Naive thymus-derived CD4-positive, alpha-beta T cell (primary cell): ENCODE measurements at regions of chr12 and their contacts with region 1.

Region 1: GRCh38 chr12:47705566-47706425 is at the start of gene RPAP3:
- DNase-seq: peak; percentile 91 to 99 (median 95)
- ATAC-seq: peak; percentile 97
- H3K4me3 ChIP-seq: peak within 1 kb of the TSS; percentile 59
- H3K4me3 Mint-ChIP-seq: peak within 1 kb of the TSS; percentile 92 to 99 (median 98)
- H3K27ac ChIP-seq: peak within 1 kb of the TSS; percentile 85
- H3K27ac Mint-ChIP-seq: peak within 1 kb of the TSS; percentile 93 to 99 (median 97)
- H3K4me1 ChIP-seq: peaks cover 21 to 27% of the 10 kb centered on the region in 2 donors
- H3K4me1 Mint-ChIP-seq: peaks cover 48 to 73% (median 63%) of the 10 kb centered on the region in 7 donors
- H3K27me3 ChIP-seq: no peaks in the 10 kb centered on the region
- H3K27me3 Mint-ChIP-seq: no peaks in the 10 kb centered on the region
- total RNA-seq, gene RPAP3: 28.5 to 51.3 (median 43.9) TPM

Region 2: GRCh38 chr12:46217541-46218321 is 1488.1 kb before region 1 on chr12:
- CTCF ChIA-PET with region 1: no interaction called
- POLR2A ChIA-PET with region 1: no interaction called
- intact Hi-C with region 1: loop called in 1 of 2 experiments (anchors 5 kb)
- DNase-seq: peak in 8 of 9 donors; percentile 58 to 87 (median 84)
- ATAC-seq: peak; percentile 54
- H3K4me3 ChIP-seq: peak overlapping the region; percentile 41
- H3K4me3 Mint-ChIP-seq: peak overlapping the region; percentile 74 to 89 (median 81)
- H3K27ac ChIP-seq: peak overlapping the region; percentile 78
- H3K27ac Mint-ChIP-seq: peak overlapping the region; percentile 89 to 100 (median 99)
- H3K4me1 ChIP-seq: peaks cover 95% of the 10 kb centered on the region in 2 donors
- H3K4me1 Mint-ChIP-seq: peaks cover 69 to 100% (median 98%) of the 10 kb centered on the region in 7 donors
- H3K27me3 ChIP-seq: no peaks in the 10 kb centered on the region
- H3K27me3 Mint-ChIP-seq: no peaks in the 10 kb centered on the region

Region 3: GRCh38 chr12:47190271-47190750 is 515.5 kb before region 1 on chr12:
- CTCF ChIA-PET with region 1: no interaction called
- POLR2A ChIA-PET with region 1: no interaction called
- intact Hi-C with region 1: loop called in 1 of 2 experiments (anchors 5 kb)
- DNase-seq: no peak
- ATAC-seq: no peak
- H3K4me3 ChIP-seq: no peak overlapping the region
- H3K4me3 Mint-ChIP-seq: peak overlapping the region; percentile 42 to 87 (median 76)
- H3K27ac ChIP-seq: peak overlapping the region; percentile 61
- H3K27ac Mint-ChIP-seq: peak overlapping the region; percentile 81 to 98 (median 93)
- H3K4me1 ChIP-seq: peaks cover 52 to 77% of the 10 kb centered on the region in 2 donors
- H3K4me1 Mint-ChIP-seq: peaks cover 69 to 98% (median 93%) of the 10 kb centered on the region in 7 donors
- H3K27me3 ChIP-seq: no peaks in the 10 kb centered on the region
- H3K27me3 Mint-ChIP-seq: no peaks in the 10 kb centered on the region

Region 4: DNA sequence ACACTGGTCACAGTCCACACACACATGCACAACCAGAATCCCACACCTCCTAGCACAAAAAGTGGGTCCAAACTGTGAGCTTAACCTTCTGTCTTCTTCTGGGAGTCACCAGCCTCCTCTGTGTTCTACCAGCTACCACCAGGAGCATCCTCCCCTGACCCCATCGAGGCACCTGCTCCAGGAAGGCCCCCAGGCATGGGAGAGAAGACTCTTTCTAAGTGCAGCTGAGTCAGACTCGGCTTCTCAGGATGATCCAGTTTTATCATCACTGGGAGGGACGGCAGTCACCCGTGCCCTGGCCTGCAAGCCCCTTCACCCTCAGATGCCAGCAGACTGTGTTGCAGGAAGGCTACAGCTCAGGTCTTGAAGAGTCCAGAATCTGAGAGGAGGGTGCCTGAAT is 27.3 kb after region 1 on chr12:
- CTCF ChIA-PET with region 1: no interaction called
- POLR2A ChIA-PET with region 1: no interaction called
- intact Hi-C with region 1: no loop called
- DNase-seq: no peak
- ATAC-seq: no peak
- H3K4me3 ChIP-seq: no peak overlapping the region
- H3K4me3 Mint-ChIP-seq: no peak overlapping the region
- H3K27ac ChIP-seq: no peak overlapping the region
- H3K27ac Mint-ChIP-seq: peak overlapping the region in 1 of 9 donors; percentile 25
- H3K4me1 ChIP-seq: no peaks in the 10 kb centered on the region
- H3K4me1 Mint-ChIP-seq: peaks cover 0 to 7% (median 0%) of the 10 kb centered on the region in 7 donors
- H3K27me3 ChIP-seq: no peaks in the 10 kb centered on the region
- H3K27me3 Mint-ChIP-seq: no peaks in the 10 kb centered on the region

Region 5: DNA sequence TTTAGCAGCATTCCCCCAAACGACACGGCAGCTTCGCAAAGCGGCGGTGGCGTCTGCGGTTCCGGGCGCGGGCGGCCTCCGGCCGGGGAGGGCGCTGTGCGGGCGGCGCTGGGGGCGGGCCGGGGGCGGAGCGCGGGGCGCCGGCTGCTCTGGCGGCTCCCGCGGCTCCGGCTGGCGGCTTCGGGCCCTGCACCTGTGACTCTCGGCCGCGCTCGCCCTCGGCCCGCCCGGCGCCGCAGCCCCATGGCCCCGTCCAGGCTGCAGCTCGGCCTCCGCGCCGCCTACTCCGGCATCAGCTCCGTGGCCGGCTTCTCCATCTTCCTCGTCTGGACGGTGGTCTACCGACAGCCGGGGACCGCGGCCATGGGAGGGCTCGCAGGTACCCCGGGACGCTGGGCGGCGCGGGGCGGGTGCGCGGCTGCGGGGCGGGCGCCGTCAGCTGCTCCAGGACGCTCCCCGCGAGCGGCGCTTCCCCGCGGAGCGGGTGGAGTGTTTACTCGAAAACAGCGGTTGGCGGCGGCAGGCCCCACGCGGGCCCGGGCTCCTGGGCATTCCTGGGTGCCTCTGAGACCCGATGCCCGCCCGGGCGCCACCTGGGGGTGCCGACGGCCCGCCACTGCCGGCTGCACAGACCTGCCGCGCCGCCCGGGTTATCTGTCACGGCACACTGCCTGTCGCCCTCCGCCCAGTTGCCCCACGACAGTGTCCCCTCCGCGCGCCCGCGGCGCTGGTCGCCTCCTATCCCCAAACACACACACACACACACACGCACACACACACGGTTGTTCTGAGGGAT is 67.5 kb after region 1 on chr12 and contains the start of gene SLC48A1:
- CTCF ChIA-PET with region 1: interaction called, 5 read pairs
- POLR2A ChIA-PET with region 1: interaction called, 3 read pairs
- intact Hi-C with region 1: loop called in 1 of 2 experiments (anchors 1 kb)
- DNase-seq: peak; percentile 63 to 84 (median 80)
- ATAC-seq: peak; percentile 96
- H3K4me3 ChIP-seq: peak within 1 kb of the TSS; percentile 59
- H3K4me3 Mint-ChIP-seq: peak within 1 kb of the TSS in 9 of 10 donors; percentile 83 to 94 (median 91)
- H3K27ac ChIP-seq: peak within 1 kb of the TSS; percentile 74
- H3K27ac Mint-ChIP-seq: peak within 1 kb of the TSS; percentile 75 to 94 (median 80)
- H3K4me1 ChIP-seq: peaks cover 7 to 8% of the 10 kb centered on the region in 2 donors
- H3K4me1 Mint-ChIP-seq: peaks cover 7 to 47% (median 25%) of the 10 kb centered on the region in 7 donors
- H3K27me3 ChIP-seq: no peaks in the 10 kb centered on the region
- H3K27me3 Mint-ChIP-seq: peaks cover 0 to 8% (median 0%) of the 10 kb centered on the region in 5 donors
- total RNA-seq, gene SLC48A1: 6.7 to 14.3 (median 10.0) TPM

Region 6: DNA sequence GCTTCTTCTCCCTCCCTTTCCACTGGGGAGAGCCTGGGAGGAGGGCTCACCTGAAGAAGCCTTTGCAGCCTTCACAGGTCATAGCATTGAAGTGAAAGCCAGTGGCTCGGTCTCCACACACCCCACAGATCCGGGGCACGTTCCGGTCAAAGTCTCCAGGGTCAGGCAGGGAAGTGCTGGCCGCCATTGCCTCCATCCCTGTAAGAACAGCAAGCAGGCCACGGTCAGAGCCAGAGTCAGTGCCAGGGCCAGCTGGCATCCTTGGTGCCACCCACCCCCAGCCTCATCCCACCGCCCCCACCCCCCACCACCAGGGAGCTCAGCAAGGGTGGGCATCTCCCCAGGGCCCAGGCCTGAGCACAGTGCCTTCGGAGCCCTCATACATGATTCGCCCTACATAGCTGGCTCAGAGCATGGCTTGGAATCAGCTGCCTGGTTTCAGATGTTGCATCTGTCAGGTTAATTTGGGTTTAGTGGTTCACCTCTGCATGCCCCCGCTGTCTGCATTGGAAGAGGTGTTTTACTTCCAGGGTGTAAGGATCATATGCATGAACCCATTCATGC is 173.2 kb after region 1 on chr12:
- CTCF ChIA-PET with region 1: no interaction called
- POLR2A ChIA-PET with region 1: no interaction called
- intact Hi-C with region 1: no loop called
- DNase-seq: no peak
- ATAC-seq: no peak
- H3K4me3 ChIP-seq: no peak overlapping the region
- H3K4me3 Mint-ChIP-seq: no peak overlapping the region
- H3K27ac ChIP-seq: no peak overlapping the region
- H3K27ac Mint-ChIP-seq: no peak overlapping the region
- H3K4me1 ChIP-seq: peaks cover 8 to 21% of the 10 kb centered on the region in 2 donors
- H3K4me1 Mint-ChIP-seq: peaks cover 22 to 70% (median 28%) of the 10 kb centered on the region in 7 donors
- H3K27me3 ChIP-seq: no peaks in the 10 kb centered on the region
- H3K27me3 Mint-ChIP-seq: no peaks in the 10 kb centered on the region

Region 7: DNA sequence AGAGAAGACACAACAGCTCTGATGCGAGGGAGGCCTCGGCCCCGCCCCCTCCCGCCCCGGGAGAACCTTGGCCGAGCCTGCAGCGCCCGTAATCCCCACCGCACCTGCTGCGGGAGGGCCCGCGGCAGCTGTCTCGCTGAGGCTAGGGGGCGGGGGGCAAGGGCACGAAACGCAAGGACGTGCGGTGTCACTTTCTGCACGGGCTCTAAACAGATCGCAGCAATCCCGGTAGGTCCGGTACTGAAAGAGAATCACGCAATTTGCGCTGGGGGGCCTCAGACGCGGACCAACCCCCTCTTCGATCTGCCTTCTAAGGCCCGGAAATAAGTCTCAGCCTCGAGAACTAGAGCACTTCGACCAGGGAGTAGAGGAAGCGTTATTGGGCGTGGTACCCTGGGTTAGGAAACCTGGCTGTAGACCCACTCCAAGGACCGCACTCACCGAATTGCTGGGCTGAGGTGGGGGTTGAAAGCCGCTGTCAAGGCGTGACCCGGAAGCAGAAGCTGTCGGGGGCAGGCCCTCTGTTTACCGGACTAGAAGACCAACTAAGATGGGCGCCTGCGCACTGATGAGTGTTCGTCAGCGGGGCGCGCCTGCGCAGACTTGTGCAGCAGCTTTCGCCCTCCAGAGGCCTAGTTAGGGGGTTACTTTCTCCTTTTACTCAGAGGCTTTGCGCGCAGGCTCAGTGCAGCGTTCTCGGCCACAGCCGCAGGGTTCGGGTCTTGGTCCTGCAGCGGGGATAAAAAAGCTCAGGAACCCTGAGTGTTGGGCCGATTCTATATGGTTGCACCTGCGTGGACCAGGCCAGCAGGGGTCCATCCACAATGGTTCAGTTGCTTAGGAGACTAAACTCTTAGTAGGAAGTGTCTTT is 451.5 kb after region 1 on chr12 and contains the start of gene ASB8:
- CTCF ChIA-PET with region 1: interaction called, 3 read pairs
- POLR2A ChIA-PET with region 1: interaction called, 4 read pairs
- intact Hi-C with region 1: loop called (anchors 1 kb)
- DNase-seq: peak; percentile 95 to 99 (median 98)
- ATAC-seq: peak; percentile 98
- H3K4me3 ChIP-seq: peak within 1 kb of the TSS; percentile 97
- H3K4me3 Mint-ChIP-seq: peak within 1 kb of the TSS; percentile 90 to 99 (median 97)
- H3K27ac ChIP-seq: peak within 1 kb of the TSS; percentile 84
- H3K27ac Mint-ChIP-seq: peak within 1 kb of the TSS; percentile 95 to 99 (median 99)
- H3K4me1 ChIP-seq: peaks cover 8 to 20% of the 10 kb centered on the region in 2 donors
- H3K4me1 Mint-ChIP-seq: peaks cover 22 to 65% (median 56%) of the 10 kb centered on the region in 7 donors
- H3K27me3 ChIP-seq: no peaks in the 10 kb centered on the region
- H3K27me3 Mint-ChIP-seq: peaks cover 0 to 5% (median 0%) of the 10 kb centered on the region in 5 donors
- total RNA-seq, gene ASB8: 42.9 to 75.9 (median 54.9) TPM

Region 8: GRCh38 chr12:48681738-48682532 is 976.1 kb after region 1 on chr12 and contains the start of gene KANSL2:
- CTCF ChIA-PET with region 1: no interaction called
- POLR2A ChIA-PET with region 1: no interaction called
- intact Hi-C with region 1: loop called in 1 of 2 experiments (anchors 1 kb)
- DNase-seq: peak; percentile 79 to 98 (median 96)
- ATAC-seq: peak; percentile 97
- H3K4me3 ChIP-seq: peak within 1 kb of the TSS; percentile 88
- H3K4me3 Mint-ChIP-seq: peak within 1 kb of the TSS; percentile 93 to 99 (median 97)
- H3K27ac ChIP-seq: peak within 1 kb of the TSS; percentile 90
- H3K27ac Mint-ChIP-seq: peak within 1 kb of the TSS; percentile 97 to 99 (median 98)
- H3K4me1 ChIP-seq: peaks cover 30 to 38% of the 10 kb centered on the region in 2 donors
- H3K4me1 Mint-ChIP-seq: peaks cover 32 to 59% (median 53%) of the 10 kb centered on the region in 7 donors
- H3K27me3 ChIP-seq: no peaks in the 10 kb centered on the region
- H3K27me3 Mint-ChIP-seq: no peaks in the 10 kb centered on the region
- total RNA-seq, gene KANSL2: 37.5 to 117 (median 74.4) TPM